ENCODE measurements at regions of chr2 and their contacts with region 1.

Region 1: GRCh38 chr2:213251618-213252017 is 32.6 kb upstream of the SPAG16 start:
- DNase-seq: no peak
- H3K4me3 ChIP-seq: peak overlapping the region in 48 of 59 donors; percentile 3 to 54 (median 34)
- H3K27ac ChIP-seq: no peak overlapping the region
- H3K27me3 ChIP-seq: peaks cover 0 to 3% (median 0%) of the 10 kb centered on the region in 45 donors
- CTCF ChIP-seq: peak; percentile 56 to 98 (median 84)

Region 2: GRCh38 chr2:215002500-215002899 is 1750.9 kb after region 1 on chr2:
- intact Hi-C with region 1: loop called in 1 of 2 experiments (anchors 10 kb)
- DNase-seq: peak in 2 of 10 donors; percentile 36 to 42
- H3K4me3 ChIP-seq: peak overlapping the region in 14 of 59 donors; percentile 0 to 42 (median 14)
- H3K27ac ChIP-seq: peak overlapping the region in 4 of 59 donors; percentile 22 to 37 (median 26)
- H3K27me3 ChIP-seq: no peaks in the 10 kb centered on the region
- CTCF ChIP-seq: peak; percentile 35 to 80 (median 64)